Dendritic cell treated with granulocyte-macrophage colony-stimulating factor and Interleukin-4, amounts not matched to agents 40 ng/mL and 50 ng/mL, for 4 days (primary cell): ENCODE measurements at regions of chrX and their contacts with region 1.

Region 1: DNA sequence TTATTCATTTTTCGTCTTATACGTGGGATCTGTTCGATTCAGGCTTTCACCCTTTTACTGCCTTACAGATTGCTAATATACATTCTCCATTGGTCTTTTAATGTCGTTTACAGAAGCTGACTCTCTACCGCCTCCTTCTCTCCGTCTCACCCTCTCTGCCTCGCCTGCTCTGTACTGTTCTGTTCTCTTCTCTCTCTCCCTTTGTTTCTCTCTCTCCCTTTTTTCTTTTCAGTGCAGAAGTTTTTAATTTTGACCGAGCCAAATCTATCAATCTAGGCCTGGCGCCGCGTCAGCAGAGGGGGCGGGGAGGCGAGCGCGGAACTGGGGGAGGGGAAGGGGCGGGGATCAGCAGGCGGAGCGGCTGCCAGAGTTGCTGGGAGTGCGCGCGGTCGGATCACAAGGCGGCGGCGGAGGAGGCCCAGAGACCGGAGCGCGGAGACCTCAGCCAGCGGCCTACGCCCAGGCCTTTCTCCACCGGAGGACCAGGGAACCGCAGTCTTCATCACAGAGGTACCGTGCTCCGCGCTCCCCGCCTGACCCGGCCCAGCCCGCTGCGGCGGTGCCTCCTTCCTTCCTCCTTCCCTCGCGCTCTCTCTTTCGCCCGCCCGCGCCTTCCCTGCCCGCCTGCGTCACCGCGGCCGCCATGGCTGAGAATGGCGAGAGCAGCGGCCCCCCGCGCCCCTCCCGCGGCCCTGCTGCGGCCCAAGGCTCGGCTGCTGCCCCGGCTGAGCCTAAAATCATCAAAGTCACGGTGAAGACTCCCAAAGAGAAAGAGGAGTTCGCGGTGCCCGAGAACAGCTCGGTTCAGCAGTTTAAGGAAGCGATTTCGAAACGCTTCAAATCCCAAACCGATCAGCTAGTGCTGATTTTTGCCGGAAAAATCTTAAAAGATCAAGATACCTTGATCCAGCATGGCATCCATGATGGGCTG is at the start of gene UBQLN2:
- H3K4me3 Mint-ChIP-seq: peak within 1 kb of the TSS; percentile 92
- H3K27ac Mint-ChIP-seq: peak within 1 kb of the TSS; percentile 97
- H3K4me1 Mint-ChIP-seq: peaks cover 15% of the 10 kb centered on the region
- H3K27me3 Mint-ChIP-seq: no peaks in the 10 kb centered on the region

Region 2: GRCh38 chrX:55717521-55718497 is 845.7 kb before region 1 on chrX and contains the start of gene RRAGB:
- intact Hi-C with region 1: loop called (anchors 10 kb)
- H3K4me3 Mint-ChIP-seq: peak within 1 kb of the TSS; percentile 88
- H3K27ac Mint-ChIP-seq: peak within 1 kb of the TSS; percentile 87
- H3K4me1 Mint-ChIP-seq: peaks cover 34% of the 10 kb centered on the region
- H3K27me3 Mint-ChIP-seq: no peaks in the 10 kb centered on the region

Region 3: DNA sequence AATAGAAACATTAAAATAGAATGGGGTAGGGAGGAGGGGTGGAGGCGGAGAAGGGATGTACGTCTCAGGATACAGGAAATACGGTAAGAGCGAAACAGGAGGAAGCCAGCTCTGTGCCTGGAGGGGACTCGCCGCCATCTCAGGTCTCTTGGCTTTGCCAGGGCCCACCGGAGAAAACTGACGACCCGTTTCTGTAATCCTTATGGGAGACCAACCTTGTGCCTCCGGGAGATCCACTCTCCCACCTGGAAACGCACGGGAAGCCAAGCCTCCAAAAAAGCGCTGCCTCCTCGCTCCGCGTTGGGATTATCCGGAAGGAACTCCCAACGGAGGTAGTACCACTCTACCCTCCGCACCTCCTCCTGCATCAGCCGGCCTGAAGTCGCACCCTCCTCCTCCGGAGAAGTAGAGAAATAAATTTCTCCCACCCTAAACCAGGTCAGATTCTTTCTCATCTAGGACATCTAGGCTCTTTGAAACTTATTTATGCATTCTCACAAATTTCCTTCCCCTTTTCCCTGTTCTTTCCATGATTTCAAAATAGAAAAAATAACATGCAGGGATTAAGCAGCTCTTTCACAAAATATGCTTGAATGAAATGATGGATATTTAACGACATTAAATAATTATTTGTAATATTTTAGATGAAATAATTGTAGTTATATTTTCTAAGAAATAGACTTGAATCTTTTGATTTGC is 165.8 kb after region 1 on chrX and contains the start of gene NBDY:
- intact Hi-C with region 1: loop called (anchors 5 kb)
- H3K4me3 Mint-ChIP-seq: peak within 1 kb of the TSS; percentile 86
- H3K27ac Mint-ChIP-seq: peak within 1 kb of the TSS; percentile 85
- H3K4me1 Mint-ChIP-seq: peaks cover 5% of the 10 kb centered on the region
- H3K27me3 Mint-ChIP-seq: no peaks in the 10 kb centered on the region